ENCODE measurements at regions of chr14 and their contacts with region 1.

Region 1: DNA sequence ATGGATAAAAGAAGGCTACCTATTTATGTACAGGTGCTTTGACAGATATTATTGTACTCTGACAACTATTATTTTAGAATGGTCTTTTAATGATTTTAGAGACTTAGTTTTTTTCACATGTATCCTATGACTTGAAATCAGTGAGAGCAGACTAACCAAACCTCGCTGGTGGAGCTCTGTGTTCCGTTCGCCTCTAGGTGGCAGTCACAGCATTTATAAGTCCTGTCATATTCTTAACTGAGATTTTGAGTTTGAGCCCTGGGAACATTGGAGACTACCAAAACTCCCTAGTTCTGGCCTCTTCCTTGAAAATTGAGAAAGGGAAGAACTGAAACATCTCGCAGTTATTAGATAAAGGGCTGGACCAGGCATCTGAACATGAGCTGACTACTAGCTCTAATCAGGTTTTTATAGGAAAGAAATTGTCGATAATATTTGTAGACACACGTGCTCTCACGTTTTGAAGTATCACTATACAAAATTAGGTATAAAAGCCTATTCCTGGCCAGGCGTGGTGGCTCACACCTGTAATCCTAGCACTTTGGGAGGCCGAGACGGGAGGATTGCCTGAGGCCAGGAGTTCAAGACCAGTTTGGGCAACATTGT is 48.3 kb downstream of the TTLL5 start:
- DNase-seq: peak; percentile 78
- ATAC-seq: peak; percentile 86
- H3K4me3 Mint-ChIP-seq: no peak overlapping the region
- H3K27ac Mint-ChIP-seq: no peak overlapping the region
- H3K4me1 Mint-ChIP-seq: no peaks in the 10 kb centered on the region
- H3K27me3 Mint-ChIP-seq: no peaks in the 10 kb centered on the region

Region 2: GRCh38 chr14:75452900-75453747 is 256.2 kb before region 1 on chr14:
- CTCF ChIA-PET with region 1: no interaction called
- POLR2A ChIA-PET with region 1: no interaction called
- DNase-seq: no peak
- ATAC-seq: no peak
- H3K4me3 Mint-ChIP-seq: no peak overlapping the region
- H3K27ac Mint-ChIP-seq: peak overlapping the region; percentile 50
- H3K4me1 Mint-ChIP-seq: peaks cover 5% of the 10 kb centered on the region
- H3K27me3 Mint-ChIP-seq: peaks cover 10% of the 10 kb centered on the region

Region 3: GRCh38 chr14:75689012-75689411 is 20.3 kb before region 1 on chr14:
- CTCF ChIA-PET with region 1: interaction called, 12 read pairs
- POLR2A ChIA-PET with region 1: no interaction called
- DNase-seq: no peak
- ATAC-seq: no peak
- H3K4me3 Mint-ChIP-seq: no peak overlapping the region
- H3K27ac Mint-ChIP-seq: no peak overlapping the region
- H3K4me1 Mint-ChIP-seq: no peaks in the 10 kb centered on the region
- H3K27me3 Mint-ChIP-seq: no peaks in the 10 kb centered on the region

Region 4: DNA sequence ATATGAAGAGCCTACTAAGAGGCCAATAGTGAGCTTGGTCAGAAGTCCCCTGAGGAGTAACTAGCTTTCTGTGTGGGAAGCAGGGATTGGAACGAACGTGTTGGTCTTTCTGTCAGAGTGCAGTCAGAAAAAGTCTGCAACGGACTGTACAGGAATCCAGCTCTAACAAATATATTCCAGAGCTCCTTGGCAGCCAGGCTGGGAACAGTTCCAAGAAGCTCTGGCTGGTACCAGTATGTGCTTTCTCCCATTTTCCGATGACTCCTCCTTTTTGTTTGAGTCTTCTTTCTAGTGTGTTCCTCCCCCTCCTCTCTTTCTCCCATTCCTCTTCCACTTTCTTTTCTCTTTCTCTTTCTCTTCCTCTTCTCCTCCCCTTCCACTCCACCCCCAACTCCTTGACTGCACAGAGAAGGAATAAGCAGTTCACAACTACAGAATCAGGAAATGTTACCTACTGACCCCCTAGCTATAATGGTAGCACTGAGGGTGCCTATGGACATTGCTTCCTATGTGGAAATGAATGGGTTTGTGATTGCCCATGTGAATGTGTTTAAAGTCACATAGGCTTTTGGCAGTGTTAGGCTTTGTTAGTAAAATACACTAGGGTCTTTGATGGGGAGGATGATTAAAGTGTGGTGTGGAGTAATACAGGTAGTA is 11.7 kb after region 1 on chr14:
- CTCF ChIA-PET with region 1: interaction called, 10 read pairs
- POLR2A ChIA-PET with region 1: no interaction called
- DNase-seq: no peak
- ATAC-seq: no peak
- H3K4me3 Mint-ChIP-seq: no peak overlapping the region
- H3K27ac Mint-ChIP-seq: no peak overlapping the region
- H3K4me1 Mint-ChIP-seq: peaks cover 7% of the 10 kb centered on the region
- H3K27me3 Mint-ChIP-seq: no peaks in the 10 kb centered on the region

Region 5: DNA sequence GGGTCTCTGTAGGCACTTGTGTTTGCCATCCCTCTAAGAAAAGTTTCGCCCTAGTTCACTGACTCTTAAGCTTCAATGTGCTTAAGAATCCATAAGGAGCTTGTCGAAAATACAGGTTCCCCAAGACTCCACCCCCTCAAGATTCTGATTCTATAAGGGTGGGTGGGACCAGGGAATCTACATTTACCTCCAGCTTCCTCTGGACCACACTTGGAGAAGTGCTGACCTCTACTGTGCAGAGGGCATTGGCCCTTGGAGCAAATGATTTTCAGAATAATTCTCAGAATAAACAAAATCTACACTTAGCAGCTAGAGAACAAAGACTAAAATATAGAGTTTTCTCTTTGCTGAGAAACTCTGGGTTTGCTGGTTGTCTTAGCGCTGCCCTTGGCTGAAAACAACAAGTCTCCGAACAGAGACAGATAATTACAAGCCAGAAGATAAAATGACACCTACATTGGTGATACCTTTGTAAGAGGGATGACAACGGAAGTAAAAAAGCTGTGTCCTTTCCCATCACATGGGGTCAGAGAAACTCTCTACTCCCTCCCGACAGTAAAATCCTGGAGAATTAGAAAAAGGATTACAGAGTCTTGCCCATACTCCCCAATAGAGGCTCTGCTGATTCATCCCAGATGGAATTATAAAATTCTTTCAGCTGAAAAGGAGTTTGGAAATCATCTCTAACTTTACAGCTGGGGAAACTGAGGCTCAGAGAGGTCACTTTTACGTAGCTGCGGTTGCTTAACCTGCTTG is 267.7 kb after region 1 on chr14:
- CTCF ChIA-PET with region 1: interaction called, 202 read pairs
- POLR2A ChIA-PET with region 1: no interaction called
- DNase-seq: no peak
- ATAC-seq: no peak
- H3K4me3 Mint-ChIP-seq: no peak overlapping the region
- H3K27ac Mint-ChIP-seq: no peak overlapping the region
- H3K4me1 Mint-ChIP-seq: peaks cover 36% of the 10 kb centered on the region
- H3K27me3 Mint-ChIP-seq: no peaks in the 10 kb centered on the region

Region 6: DNA sequence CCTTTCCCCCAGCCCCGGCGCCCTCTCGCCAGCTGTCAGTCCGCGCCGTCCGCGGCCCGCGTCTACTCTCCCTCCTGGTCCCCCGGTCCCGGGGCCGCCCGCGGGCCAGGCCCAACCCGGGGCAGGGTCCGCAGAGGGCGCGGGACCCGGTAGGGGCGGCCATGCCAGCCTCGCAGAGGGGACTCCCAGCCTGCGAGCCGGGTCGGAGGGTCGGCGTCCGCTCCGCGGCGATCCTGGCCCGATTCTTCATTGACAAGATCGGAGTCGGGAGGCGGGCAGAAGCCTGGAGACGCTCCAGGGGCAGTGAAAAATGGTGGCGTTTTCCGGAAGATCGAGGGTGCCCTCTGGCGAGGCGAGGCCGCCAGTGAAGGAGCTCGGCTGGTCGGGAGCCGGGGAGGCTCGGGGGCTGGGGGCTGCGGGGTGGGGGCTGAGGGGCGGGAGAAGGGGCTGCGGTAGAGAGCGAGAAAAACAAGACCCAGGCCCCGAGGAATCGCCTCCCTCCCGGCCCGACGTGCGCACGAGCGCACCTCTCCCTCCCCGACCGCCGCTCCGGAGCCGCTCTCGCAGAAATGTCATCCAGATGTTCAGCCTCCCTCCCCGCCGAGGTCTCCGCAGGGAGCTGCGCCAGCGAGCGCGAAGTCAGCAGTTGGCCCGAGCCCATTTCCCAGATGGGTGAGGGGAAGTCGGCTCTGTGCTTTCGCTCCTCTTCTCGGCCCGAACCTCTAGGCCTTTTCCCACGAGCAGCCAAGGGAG is 273.1 kb after region 1 on chr14:
- CTCF ChIA-PET with region 1: interaction called, 202 read pairs
- POLR2A ChIA-PET with region 1: interaction called, 3 read pairs
- DNase-seq: peak; percentile 80
- ATAC-seq: peak; percentile 70
- H3K4me3 Mint-ChIP-seq: peak overlapping the region; percentile 69
- H3K27ac Mint-ChIP-seq: no peak overlapping the region
- H3K4me1 Mint-ChIP-seq: peaks cover 49% of the 10 kb centered on the region
- H3K27me3 Mint-ChIP-seq: peaks cover 11% of the 10 kb centered on the region

Measured in activated CD8-positive, alpha-beta T cell treated with anti-CD3 and anti-CD28 coated beads, Interleukin-2, amount 10 ng/mL, durations not matched to agents 7 days and 5 days (primary cell).